Sciatic nerve (tissue), 2 donors: ENCODE measurements at regions of chr3 and their contacts with region 1.

Region 1: GRCh38 chr3:176490357-176490756 is 706.9 kb downstream of the TBL1XR1 start:
- DNase-seq: no peak
- ATAC-seq: no peak

Region 2: GRCh38 chr3:174662653-174663052 is 1827.7 kb before region 1 on chr3:
- intact Hi-C with region 1: loop called (anchors 5 kb)
- DNase-seq: no peak
- ATAC-seq: no peak

Region 3: DNA sequence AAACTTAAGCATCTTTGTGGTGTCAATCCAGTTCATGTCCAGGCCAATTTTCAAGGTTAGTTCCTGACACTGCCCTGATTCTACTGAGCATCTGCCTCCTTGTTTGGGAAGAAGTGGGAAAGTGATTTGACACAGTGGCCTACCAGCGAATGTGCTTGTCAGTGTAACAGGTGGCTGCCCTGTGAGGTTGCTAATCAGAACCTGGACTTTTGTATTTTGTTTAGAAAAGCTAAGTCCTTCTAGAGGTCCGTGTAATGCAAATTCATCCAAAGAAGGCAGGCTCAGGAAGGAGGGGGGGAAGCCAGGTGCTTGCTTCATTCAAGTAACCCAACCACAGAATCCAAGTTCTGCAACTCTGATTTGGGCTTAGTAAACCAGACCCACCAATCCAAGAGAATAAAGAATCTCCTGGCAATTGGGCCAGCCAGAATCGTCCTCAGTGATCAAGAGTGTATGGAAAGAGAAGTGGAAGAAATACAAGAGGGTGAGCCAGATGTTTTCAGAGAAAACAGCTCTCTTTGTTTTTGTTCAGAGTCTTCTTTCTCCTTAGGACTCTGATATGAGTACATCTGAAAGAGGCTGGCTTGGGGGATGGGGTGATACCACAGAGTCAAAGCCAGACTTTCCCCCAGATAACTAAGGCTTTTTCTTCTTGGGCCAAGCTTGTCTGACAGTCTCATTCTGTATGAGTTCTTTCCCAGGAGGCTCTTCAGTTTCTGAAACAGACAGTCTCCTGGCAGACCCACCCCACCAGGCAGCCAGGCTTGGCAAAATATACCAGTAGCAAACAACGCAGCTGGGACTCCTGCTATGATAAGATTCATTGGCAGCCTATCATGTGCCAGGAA is 1215.8 kb after region 1 on chr3:
- intact Hi-C with region 1: no loop called
- DNase-seq: peak; percentile 66
- ATAC-seq: peak; percentile 95